ENCODE measurements at regions of chr14 and their contacts with region 1.

Region 1: GRCh38 chr14:81565441-81566290 is 32.0 kb upstream of the SEL1L start:
- DNase-seq: peak in 1 of 2 experiments; percentile 55
- H3K4me3 ChIP-seq: no peak overlapping the region
- H3K4me3 Mint-ChIP-seq: no peak overlapping the region
- H3K27ac Mint-ChIP-seq: no peak overlapping the region
- H3K4me1 ChIP-seq: no peaks in the 10 kb centered on the region
- H3K4me1 Mint-ChIP-seq: peaks cover 8% of the 10 kb centered on the region
- H3K27me3 ChIP-seq: no peaks in the 10 kb centered on the region
- H3K27me3 Mint-ChIP-seq: peaks cover 10% of the 10 kb centered on the region
- CTCF ChIP-seq: peak; percentile 68 to 69

Region 2: DNA sequence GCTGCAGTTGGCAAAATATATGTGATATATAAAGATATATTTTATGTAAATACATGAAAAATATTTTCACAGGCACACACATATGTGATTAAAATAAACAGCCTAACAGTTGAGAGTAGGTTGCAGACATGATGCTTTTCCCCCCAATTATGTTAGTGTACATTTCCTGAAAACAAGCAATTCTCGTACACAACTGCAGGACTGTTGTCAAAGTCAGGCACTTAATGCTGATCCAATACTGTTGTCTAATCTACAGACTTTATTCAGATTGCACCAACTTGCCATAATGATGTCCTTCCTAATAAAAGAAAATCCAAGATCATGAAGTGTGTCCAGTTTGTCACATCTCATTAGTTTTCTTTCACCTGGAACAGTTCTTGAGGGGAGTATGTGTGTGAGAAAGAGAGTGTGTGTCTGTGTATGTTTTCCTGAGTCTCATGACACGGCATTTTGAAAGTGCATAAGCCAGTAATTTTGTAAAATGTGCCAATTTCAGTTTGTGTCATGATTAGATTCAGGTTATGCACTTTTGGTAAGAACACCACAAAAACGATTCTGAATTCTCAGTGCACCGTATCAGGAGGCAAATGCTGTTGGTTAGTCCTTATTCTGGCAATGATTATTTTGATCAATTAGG is 15.5 kb before region 1 on chr14:
- CTCF ChIA-PET with region 1: no interaction called
- POLR2A ChIA-PET with region 1: no interaction called
- intact Hi-C with region 1: no loop called
- DNase-seq: no peak
- H3K4me3 ChIP-seq: no peak overlapping the region
- H3K4me3 Mint-ChIP-seq: no peak overlapping the region
- H3K27ac Mint-ChIP-seq: no peak overlapping the region
- H3K4me1 ChIP-seq: no peaks in the 10 kb centered on the region
- H3K4me1 Mint-ChIP-seq: no peaks in the 10 kb centered on the region
- H3K27me3 ChIP-seq: no peaks in the 10 kb centered on the region
- H3K27me3 Mint-ChIP-seq: no peaks in the 10 kb centered on the region
- CTCF ChIP-seq: no peak

Region 3: DNA sequence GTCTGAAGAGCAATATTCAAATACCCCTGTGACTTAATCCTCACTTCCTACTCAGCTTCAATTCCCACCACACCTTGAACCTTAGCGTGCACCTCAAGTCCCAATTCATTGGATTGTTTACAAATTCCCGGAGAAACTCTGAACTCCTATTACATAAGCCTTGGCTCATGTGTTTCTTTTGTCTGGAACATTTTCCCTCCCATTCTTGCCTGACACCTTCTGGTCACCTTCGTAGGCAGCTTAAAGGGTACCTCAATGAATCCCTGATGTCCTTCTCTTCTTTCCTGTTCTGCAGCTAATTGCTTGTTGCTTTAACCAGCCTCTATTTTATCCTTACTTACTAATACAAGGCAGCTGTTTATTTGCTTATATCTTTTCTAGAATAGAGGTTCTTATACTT is 53.0 kb after region 1 on chr14:
- CTCF ChIA-PET with region 1: interaction called, 5 read pairs
- POLR2A ChIA-PET with region 1: no interaction called
- intact Hi-C with region 1: loop called (anchors 1 kb)
- DNase-seq: no peak
- H3K4me3 ChIP-seq: no peak overlapping the region
- H3K4me3 Mint-ChIP-seq: no peak overlapping the region
- H3K27ac Mint-ChIP-seq: no peak overlapping the region
- H3K4me1 ChIP-seq: no peaks in the 10 kb centered on the region
- H3K4me1 Mint-ChIP-seq: no peaks in the 10 kb centered on the region
- H3K27me3 ChIP-seq: no peaks in the 10 kb centered on the region
- H3K27me3 Mint-ChIP-seq: peaks cover 3% of the 10 kb centered on the region
- CTCF ChIP-seq: no peak

Region 4: DNA sequence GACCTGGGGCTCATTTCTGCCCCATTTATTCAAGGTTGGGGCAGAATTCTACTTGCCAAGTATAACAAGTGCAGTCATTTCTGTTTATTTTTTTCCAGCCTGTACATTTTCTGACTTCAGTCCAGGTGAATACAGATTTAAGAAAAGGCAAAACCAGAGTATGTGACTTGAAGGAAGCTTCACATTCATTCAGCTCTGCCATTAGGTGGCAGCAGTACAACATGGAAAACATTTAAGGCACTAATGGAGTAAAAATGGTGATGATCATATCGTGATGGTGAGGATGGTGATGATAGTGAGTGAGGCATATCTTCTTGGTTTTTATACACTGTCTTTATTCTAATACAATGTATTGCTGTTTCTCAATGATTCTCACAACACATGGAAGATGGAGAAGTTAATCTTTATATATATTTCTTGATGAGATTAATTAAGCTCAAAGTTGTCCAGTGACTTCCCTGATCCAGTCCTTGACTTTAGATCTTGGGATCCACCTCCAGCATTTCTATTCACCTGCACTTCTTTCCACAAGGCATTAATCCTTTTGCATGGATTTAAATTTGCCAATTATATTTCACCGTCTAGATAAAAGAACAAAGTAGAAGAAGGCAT is 144.7 kb after region 1 on chr14:
- CTCF ChIA-PET with region 1: interaction called, 5 read pairs
- POLR2A ChIA-PET with region 1: no interaction called
- intact Hi-C with region 1: loop called (anchors 2 kb)
- DNase-seq: peak in 1 of 2 experiments; percentile 57
- H3K4me3 ChIP-seq: no peak overlapping the region
- H3K4me3 Mint-ChIP-seq: no peak overlapping the region
- H3K27ac Mint-ChIP-seq: no peak overlapping the region
- H3K4me1 ChIP-seq: no peaks in the 10 kb centered on the region
- H3K4me1 Mint-ChIP-seq: no peaks in the 10 kb centered on the region
- H3K27me3 ChIP-seq: no peaks in the 10 kb centered on the region
- H3K27me3 Mint-ChIP-seq: peaks cover 3% of the 10 kb centered on the region
- CTCF ChIP-seq: peak; percentile 55 to 56

Region 5: DNA sequence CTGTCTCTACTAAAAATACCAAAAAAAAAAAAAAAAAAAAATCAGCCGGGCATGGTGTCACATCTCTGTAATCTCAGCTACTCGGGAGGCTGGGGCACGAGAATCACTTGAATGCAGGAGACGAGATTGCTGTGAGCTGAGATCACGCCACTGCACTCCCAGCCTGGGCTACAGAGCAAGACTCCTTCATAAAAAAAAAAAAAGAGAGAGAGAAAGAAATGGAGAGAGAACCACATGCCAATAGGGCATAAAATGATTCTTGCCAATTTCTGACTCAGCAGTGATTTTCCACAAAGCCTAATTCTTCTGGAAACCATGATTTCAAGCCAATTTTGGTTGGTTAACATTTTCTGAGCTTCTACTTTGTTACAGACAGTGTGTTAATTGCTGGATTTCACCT is 218.4 kb after region 1 on chr14:
- CTCF ChIA-PET with region 1: no interaction called
- POLR2A ChIA-PET with region 1: no interaction called
- intact Hi-C with region 1: no loop called
- DNase-seq: no peak
- H3K4me3 ChIP-seq: no peak overlapping the region
- H3K4me3 Mint-ChIP-seq: no peak overlapping the region
- H3K27ac Mint-ChIP-seq: no peak overlapping the region
- H3K4me1 ChIP-seq: no peaks in the 10 kb centered on the region
- H3K4me1 Mint-ChIP-seq: no peaks in the 10 kb centered on the region
- H3K27me3 ChIP-seq: no peaks in the 10 kb centered on the region
- H3K27me3 Mint-ChIP-seq: no peaks in the 10 kb centered on the region
- CTCF ChIP-seq: no peak

Measured in Caco-2 (cell line).